Activated B cell treated with CpG ODN at 0.5 μM for 24 hours (primary cell): ENCODE measurements at regions of chr11 and their contacts with region 1.

Region 1: GRCh38 chr11:122578168-122578825 is 77.2 kb upstream of the UBASH3B start:
- DNase-seq: no peak
- ATAC-seq: no peak
- H3K4me3 Mint-ChIP-seq: no peak overlapping the region
- H3K27ac Mint-ChIP-seq: no peak overlapping the region
- H3K4me1 Mint-ChIP-seq: peaks cover 10% of the 10 kb centered on the region
- H3K27me3 Mint-ChIP-seq: peaks cover 4% of the 10 kb centered on the region
- CTCF ChIP-seq: no peak

Region 2: GRCh38 chr11:122628810-122629555 is 50.7 kb after region 1 on chr11:
- CTCF ChIA-PET with region 1: interaction called, 3 read pairs
- POLR2A ChIA-PET with region 1: no interaction called
- intact Hi-C with region 1: loop called (anchors 1 kb)
- DNase-seq: peak; percentile 47
- ATAC-seq: peak; percentile 88
- H3K4me3 Mint-ChIP-seq: no peak overlapping the region
- H3K27ac Mint-ChIP-seq: no peak overlapping the region
- H3K4me1 Mint-ChIP-seq: peaks cover 2% of the 10 kb centered on the region
- H3K27me3 Mint-ChIP-seq: peaks cover 15% of the 10 kb centered on the region
- CTCF ChIP-seq: no peak